ENCODE measurements at regions of chr12 and their contacts with region 1.

Region 1: GRCh38 chr12:9364224-9365176 is 156.3 kb upstream of the PZP start:
- DNase-seq: peak; percentile 43
- H3K4me3 Mint-ChIP-seq: peak overlapping the region; percentile 49
- H3K27ac Mint-ChIP-seq: peak overlapping the region; percentile 86
- H3K4me1 Mint-ChIP-seq: peaks cover 47% of the 10 kb centered on the region
- H3K27me3 Mint-ChIP-seq: peaks cover 51% of the 10 kb centered on the region

Region 2: GRCh38 chr12:9340422-9341259 is 23.9 kb before region 1 on chr12:
- intact Hi-C with region 1: loop called (anchors 2 kb)
- DNase-seq: no peak
- H3K4me3 Mint-ChIP-seq: no peak overlapping the region
- H3K27ac Mint-ChIP-seq: peak overlapping the region; percentile 9
- H3K4me1 Mint-ChIP-seq: peaks cover 19% of the 10 kb centered on the region
- H3K27me3 Mint-ChIP-seq: peaks cover 2% of the 10 kb centered on the region

Region 3: DNA sequence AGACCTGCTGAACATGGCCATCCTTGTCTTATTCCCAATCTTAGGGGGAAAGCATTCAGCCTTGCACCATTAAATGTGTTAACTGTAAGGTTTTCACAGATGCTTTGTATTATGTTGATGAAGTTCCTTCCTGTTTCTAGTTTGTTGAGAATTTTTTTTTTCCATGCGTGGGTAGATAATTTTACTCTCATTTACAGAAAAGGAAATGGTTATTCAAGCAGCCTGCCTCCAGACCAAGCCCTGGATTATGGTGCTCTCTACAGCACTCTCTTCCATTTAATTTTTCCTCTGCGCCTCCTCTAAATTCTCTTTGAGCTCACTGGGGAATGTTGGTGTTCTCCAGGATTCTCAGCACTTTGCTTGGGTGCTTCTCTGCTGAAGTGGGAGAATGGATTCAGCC is 22.9 kb after region 1 on chr12:
- intact Hi-C with region 1: loop called (anchors 1 kb)
- DNase-seq: no peak
- H3K4me3 Mint-ChIP-seq: no peak overlapping the region
- H3K27ac Mint-ChIP-seq: peak overlapping the region; percentile 26
- H3K4me1 Mint-ChIP-seq: peaks cover 13% of the 10 kb centered on the region
- H3K27me3 Mint-ChIP-seq: peaks cover 16% of the 10 kb centered on the region

Region 4: GRCh38 chr12:9449181-9449580 is 84.7 kb after region 1 on chr12:
- intact Hi-C with region 1: no loop called
- DNase-seq: no peak
- H3K4me3 Mint-ChIP-seq: peak overlapping the region; percentile 99
- H3K27ac Mint-ChIP-seq: no peak overlapping the region
- H3K4me1 Mint-ChIP-seq: peaks cover 21% of the 10 kb centered on the region
- H3K27me3 Mint-ChIP-seq: no peaks in the 10 kb centered on the region

Region 5: GRCh38 chr12:9702255-9702654 is 337.8 kb after region 1 on chr12:
- intact Hi-C with region 1: no loop called
- DNase-seq: peak; percentile 32
- H3K4me3 Mint-ChIP-seq: peak overlapping the region; percentile 38
- H3K27ac Mint-ChIP-seq: peak overlapping the region; percentile 71
- H3K4me1 Mint-ChIP-seq: peaks cover 63% of the 10 kb centered on the region
- H3K27me3 Mint-ChIP-seq: no peaks in the 10 kb centered on the region

Measured in activated T-helper 2 cell treated with anti-CD3 and anti-CD28 coated beads, Interferon-gamma antibody, Interleukin-2, Interleukin-4, amounts not matched to agents 10 μg/mL and 5 μg/mL and 100 μg/mL, durations not matched to agents 14 hours and 24 hours and 36 hours (primary cell).